ENCODE measurements at regions of chr3 and their contacts with region 1.

Region 1: GRCh38 chr3:107235928-107236315 is 141.3 kb upstream of the CCDC54 start:
- DNase-seq: peak; percentile 56
- ATAC-seq: peak; percentile 82
- H3K4me3 Mint-ChIP-seq: peak overlapping the region; percentile 28
- H3K27ac Mint-ChIP-seq: no peak overlapping the region
- H3K4me1 Mint-ChIP-seq: peaks cover 10% of the 10 kb centered on the region
- H3K27me3 Mint-ChIP-seq: peaks cover 6% of the 10 kb centered on the region

Region 2: DNA sequence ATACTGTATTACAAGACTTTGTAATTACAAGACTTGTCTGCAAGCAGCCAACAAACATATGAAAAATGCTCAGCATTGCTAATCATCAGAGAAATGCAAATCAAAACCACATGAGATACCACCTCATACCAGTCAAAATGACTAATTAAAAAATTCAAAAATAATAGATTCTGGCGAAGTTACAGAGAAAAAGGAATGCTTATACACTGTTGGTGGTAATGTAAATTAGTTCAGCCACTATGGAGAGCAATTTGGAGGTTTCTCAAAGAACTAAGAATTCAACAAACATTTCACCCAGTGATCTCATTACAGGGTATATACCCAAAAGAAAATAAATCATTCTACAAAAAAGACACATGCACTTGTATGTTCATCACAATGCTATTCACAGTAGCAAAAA is 476.2 kb before region 1 on chr3:
- CTCF ChIA-PET with region 1: no interaction called
- POLR2A ChIA-PET with region 1: no interaction called
- intact Hi-C with region 1: no loop called
- DNase-seq: no peak
- ATAC-seq: no peak
- H3K4me3 Mint-ChIP-seq: no peak overlapping the region
- H3K27ac Mint-ChIP-seq: no peak overlapping the region
- H3K4me1 Mint-ChIP-seq: no peaks in the 10 kb centered on the region
- H3K27me3 Mint-ChIP-seq: peaks cover 2% of the 10 kb centered on the region

Region 3: GRCh38 chr3:107271787-107272387 is 36.0 kb after region 1 on chr3:
- CTCF ChIA-PET with region 1: interaction called, 20 read pairs
- POLR2A ChIA-PET with region 1: no interaction called
- intact Hi-C with region 1: loop called in 1 of 2 experiments (anchors 2 kb)
- DNase-seq: no peak
- ATAC-seq: no peak
- H3K4me3 Mint-ChIP-seq: no peak overlapping the region
- H3K27ac Mint-ChIP-seq: no peak overlapping the region
- H3K4me1 Mint-ChIP-seq: no peaks in the 10 kb centered on the region
- H3K27me3 Mint-ChIP-seq: peaks cover 11% of the 10 kb centered on the region

Region 4: DNA sequence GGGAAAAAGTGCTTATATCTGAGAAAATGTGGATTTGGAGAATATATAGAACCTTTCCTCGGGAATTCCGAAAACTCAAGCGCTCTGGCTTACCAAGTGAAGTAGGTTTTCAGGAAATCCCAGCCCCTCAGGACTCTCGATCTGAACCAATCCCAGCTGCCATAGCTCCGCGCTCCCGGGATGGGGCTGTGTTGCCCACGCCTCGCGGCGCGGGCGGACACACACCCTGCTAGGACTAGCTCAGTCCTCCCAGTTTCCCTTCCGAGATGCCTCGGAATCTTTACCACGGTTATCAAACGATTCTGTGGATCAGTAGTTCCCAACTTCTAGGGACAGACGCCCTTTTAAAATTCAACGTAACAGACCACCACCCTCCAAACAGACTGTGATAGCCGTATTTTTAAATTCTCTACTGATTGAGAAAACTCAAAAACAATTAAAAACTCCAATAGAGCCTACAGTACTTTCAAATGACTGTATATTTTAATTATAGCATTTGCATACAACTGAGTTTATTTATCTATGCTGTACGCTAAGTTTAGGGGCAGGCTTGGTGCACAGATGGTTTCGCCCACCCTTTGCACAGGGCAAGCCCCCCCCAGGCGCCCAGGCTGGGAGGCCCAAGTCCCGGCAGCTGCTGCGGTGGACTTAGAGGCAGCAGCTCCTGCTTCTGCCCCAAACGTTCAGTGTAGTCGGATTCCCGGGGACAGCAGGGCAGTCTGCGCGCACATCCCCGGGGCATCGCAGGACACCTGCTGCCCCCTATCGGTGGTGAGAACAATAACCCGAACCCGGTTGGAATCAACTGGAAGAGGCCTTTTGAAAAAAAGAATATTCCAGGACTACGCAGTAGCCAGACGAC is 193.6 kb after region 1 on chr3:
- CTCF ChIA-PET with region 1: interaction called, 32 read pairs
- POLR2A ChIA-PET with region 1: no interaction called
- intact Hi-C with region 1: loop called (anchors 1 to 2 kb)
- DNase-seq: peak; percentile 77
- ATAC-seq: peak; percentile 74
- H3K4me3 Mint-ChIP-seq: peak overlapping the region; percentile 68
- H3K27ac Mint-ChIP-seq: no peak overlapping the region
- H3K4me1 Mint-ChIP-seq: peaks cover 20% of the 10 kb centered on the region
- H3K27me3 Mint-ChIP-seq: peaks cover 3% of the 10 kb centered on the region

Region 5: DNA sequence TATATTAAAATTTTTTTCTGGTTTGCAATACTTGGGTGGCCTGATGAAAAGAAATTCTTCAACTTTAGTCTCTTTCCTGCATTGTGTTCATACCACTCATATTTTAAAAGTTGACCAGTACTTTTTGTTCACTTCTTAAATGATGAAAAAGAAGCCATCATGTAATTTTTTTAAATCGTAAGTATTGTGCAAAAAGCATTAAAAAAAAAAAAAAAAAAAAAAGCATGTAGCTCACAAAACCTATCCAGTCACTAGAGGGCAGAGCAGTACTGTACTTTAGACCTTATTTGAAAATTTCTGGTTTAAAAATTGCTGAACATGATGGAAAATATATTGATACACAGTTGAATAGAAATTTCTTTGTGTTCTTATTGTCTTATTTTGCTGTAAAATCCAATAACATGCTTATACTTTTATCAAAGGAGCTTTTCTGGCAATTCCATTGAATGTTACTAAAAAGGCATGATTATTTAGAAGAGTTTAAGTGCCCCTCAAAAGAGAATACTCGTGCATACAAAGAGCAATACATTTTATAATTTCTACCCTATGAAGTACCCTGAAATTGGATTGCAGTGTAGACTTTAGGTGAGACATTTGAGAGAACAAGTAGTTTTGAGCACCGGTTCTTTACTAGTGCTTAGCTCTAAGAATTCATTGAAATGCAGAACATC is 424.5 kb after region 1 on chr3:
- CTCF ChIA-PET with region 1: interaction called, 3 read pairs
- POLR2A ChIA-PET with region 1: no interaction called
- intact Hi-C with region 1: loop called in 1 of 2 experiments (anchors 10 kb)
- DNase-seq: no peak
- ATAC-seq: no peak
- H3K4me3 Mint-ChIP-seq: no peak overlapping the region
- H3K27ac Mint-ChIP-seq: no peak overlapping the region
- H3K4me1 Mint-ChIP-seq: peaks cover 26% of the 10 kb centered on the region
- H3K27me3 Mint-ChIP-seq: no peaks in the 10 kb centered on the region

Region 6: DNA sequence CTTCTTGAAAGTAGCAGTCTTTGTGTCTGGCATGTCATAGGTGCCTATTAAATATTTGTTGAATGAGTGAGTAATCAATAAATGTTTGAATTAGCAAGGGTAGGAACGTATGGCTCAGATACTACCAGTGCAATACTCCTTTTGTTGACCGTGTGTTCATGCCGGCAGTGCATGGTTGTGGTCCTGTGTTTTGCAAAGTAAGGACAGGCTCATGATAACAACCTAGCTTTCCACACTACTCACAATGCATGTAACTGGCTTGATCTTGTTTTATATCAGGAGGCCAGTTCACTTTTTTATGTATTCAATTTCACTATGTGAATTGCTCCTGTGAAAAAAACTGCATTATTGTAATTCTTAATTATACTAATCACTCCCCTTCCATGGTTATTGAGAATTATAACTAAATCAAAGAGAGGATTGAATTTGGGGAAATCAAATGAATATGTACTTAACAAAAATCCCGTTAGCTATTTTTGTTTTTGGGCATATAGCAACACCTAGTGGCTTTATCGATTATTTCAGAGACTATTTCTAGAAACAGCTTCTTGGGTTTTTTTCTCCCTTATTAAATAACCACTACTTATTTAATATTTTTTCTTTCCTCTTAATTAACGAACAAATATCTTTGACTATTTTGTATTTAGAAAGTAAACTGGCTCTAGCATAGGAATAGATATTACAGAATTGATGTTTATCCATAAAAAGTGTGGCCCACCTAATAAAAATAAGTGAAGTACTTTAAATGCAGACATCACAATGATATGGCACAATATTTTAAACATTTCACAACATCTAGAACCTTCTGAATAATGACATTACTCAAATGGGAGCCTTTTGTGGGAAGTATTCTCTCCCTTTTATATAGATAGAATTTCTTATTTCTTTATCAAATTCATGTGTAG is 505.3 kb after region 1 on chr3:
- CTCF ChIA-PET with region 1: no interaction called
- POLR2A ChIA-PET with region 1: no interaction called
- intact Hi-C with region 1: loop called (anchors 1 to 5 kb)
- DNase-seq: no peak
- ATAC-seq: no peak
- H3K4me3 Mint-ChIP-seq: no peak overlapping the region
- H3K27ac Mint-ChIP-seq: no peak overlapping the region
- H3K4me1 Mint-ChIP-seq: no peaks in the 10 kb centered on the region
- H3K27me3 Mint-ChIP-seq: no peaks in the 10 kb centered on the region

Region 7: DNA sequence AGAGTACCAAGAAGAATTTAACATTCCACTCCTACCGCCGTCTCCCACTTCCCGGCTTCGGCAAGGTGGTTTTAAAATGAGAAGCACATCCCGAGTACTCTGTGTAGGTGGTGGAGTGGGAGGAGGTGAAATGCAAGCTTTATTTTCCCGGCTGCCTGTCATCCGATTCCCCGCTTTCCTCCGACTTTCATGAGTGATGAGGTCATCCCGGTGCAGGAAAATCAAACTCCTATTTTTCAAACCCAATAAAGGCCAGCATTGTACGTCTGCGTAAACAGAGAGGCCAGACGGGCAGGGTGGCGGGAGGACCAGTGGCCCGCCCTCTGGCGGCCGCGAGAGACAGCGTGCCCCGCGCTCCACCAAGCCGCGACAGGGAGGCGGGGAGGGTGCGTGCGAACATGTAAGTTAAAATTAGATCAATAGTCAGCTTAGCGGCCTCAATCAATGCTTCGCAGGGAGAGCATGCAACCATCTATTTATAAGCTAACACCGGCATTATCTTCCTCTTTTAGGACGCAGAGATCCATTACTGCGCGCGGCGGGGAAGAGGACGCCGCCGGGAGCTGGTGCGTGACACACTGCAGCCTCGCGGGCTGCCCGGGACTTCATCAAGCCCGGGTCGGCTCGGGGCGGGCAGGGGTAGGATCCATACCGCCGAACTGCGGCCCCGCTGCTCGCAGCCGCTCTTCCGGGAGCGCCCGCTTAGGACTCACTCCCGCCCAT is 691.6 kb after region 1 on chr3:
- CTCF ChIA-PET with region 1: no interaction called
- POLR2A ChIA-PET with region 1: no interaction called
- intact Hi-C with region 1: loop called (anchors 2 kb)
- DNase-seq: peak; percentile 86
- ATAC-seq: peak; percentile 92
- H3K4me3 Mint-ChIP-seq: peak overlapping the region; percentile 73
- H3K27ac Mint-ChIP-seq: peak overlapping the region; percentile 76
- H3K4me1 Mint-ChIP-seq: peaks cover 9% of the 10 kb centered on the region
- H3K27me3 Mint-ChIP-seq: peaks cover 4% of the 10 kb centered on the region

Region 8: GRCh38 chr3:108477511-108478147 is 1241.7 kb after region 1 on chr3:
- CTCF ChIA-PET with region 1: interaction called, 6 read pairs
- POLR2A ChIA-PET with region 1: no interaction called
- intact Hi-C with region 1: loop called (anchors 1 to 5 kb)
- DNase-seq: peak; percentile 78
- ATAC-seq: peak; percentile 79
- H3K4me3 Mint-ChIP-seq: no peak overlapping the region
- H3K27ac Mint-ChIP-seq: no peak overlapping the region
- H3K4me1 Mint-ChIP-seq: no peaks in the 10 kb centered on the region
- H3K27me3 Mint-ChIP-seq: peaks cover 2% of the 10 kb centered on the region

Measured in activated CD4-positive, alpha-beta T cell treated with anti-CD3 and anti-CD28 coated beads for 36 hours (primary cell).